GM10248 (cell line): ENCODE measurements at regions of chr2 and their contacts with region 1.

Region 1: GRCh38 chr2:62178741-62179271 is 17.1 kb upstream of the B3GNT2 start:
- DNase-seq: no peak
- CTCF ChIP-seq: no peak

Region 2: GRCh38 chr2:62163106-62163831 is 15.5 kb before region 1 on chr2:
- CTCF ChIA-PET with region 1: interaction called, 24 read pairs
- POLR2A ChIA-PET with region 1: no interaction called
- DNase-seq: no peak
- CTCF ChIP-seq: no peak